CD8-positive, alpha-beta memory T cell (primary cell): ENCODE measurements at regions of chr6 and their contacts with region 1.

Region 1: GRCh38 chr6:112043032-112044007 is 10.6 kb upstream of the CCN6 start:
- DNase-seq: peak; percentile 89 to 94 (median 90)
- H3K4me3 ChIP-seq: peak overlapping the region; percentile 89
- H3K4me3 Mint-ChIP-seq: peak overlapping the region; percentile 96 to 99 (median 97)
- H3K27ac ChIP-seq: peak overlapping the region; percentile 89
- H3K27ac Mint-ChIP-seq: peak overlapping the region; percentile 95 to 100 (median 99)
- H3K4me1 ChIP-seq: peaks cover 12% of the 10 kb centered on the region
- H3K4me1 Mint-ChIP-seq: peaks cover 9 to 20% (median 18%) of the 10 kb centered on the region in 3 donors
- H3K27me3 ChIP-seq: no peaks in the 10 kb centered on the region
- H3K27me3 Mint-ChIP-seq: no peaks in the 10 kb centered on the region

Region 2: GRCh38 chr6:111259089-111259831 is 784.1 kb before region 1 on chr6:
- CTCF ChIA-PET with region 1: interaction called, 60 read pairs
- POLR2A ChIA-PET with region 1: interaction called, 9 read pairs
- DNase-seq: peak; percentile 99 to 100 (median 99)
- H3K4me3 ChIP-seq: peak overlapping the region; percentile 49
- H3K4me3 Mint-ChIP-seq: peak overlapping the region; percentile 81 to 93 (median 87)
- H3K27ac ChIP-seq: peak overlapping the region; percentile 86
- H3K27ac Mint-ChIP-seq: peak overlapping the region; percentile 83 to 97 (median 94)
- H3K4me1 ChIP-seq: peaks cover 26% of the 10 kb centered on the region
- H3K4me1 Mint-ChIP-seq: peaks cover 29 to 41% (median 35%) of the 10 kb centered on the region in 3 donors
- H3K27me3 ChIP-seq: no peaks in the 10 kb centered on the region
- H3K27me3 Mint-ChIP-seq: peaks cover 7 to 10% of the 10 kb centered on the region in 2 donors

Region 3: GRCh38 chr6:111721753-111722154 is 321.6 kb before region 1 on chr6:
- CTCF ChIA-PET with region 1: interaction called, 10 read pairs
- POLR2A ChIA-PET with region 1: interaction called, 10 read pairs
- DNase-seq: peak in 3 of 5 donors; percentile 35 to 47 (median 45)
- H3K4me3 ChIP-seq: no peak overlapping the region
- H3K4me3 Mint-ChIP-seq: peak overlapping the region in 6 of 7 donors; percentile 29 to 67 (median 50)
- H3K27ac ChIP-seq: no peak overlapping the region
- H3K27ac Mint-ChIP-seq: peak overlapping the region; percentile 87 to 98 (median 92)
- H3K4me1 ChIP-seq: peaks cover 72% of the 10 kb centered on the region
- H3K4me1 Mint-ChIP-seq: peaks cover 84 to 97% (median 84%) of the 10 kb centered on the region in 3 donors
- H3K27me3 ChIP-seq: no peaks in the 10 kb centered on the region
- H3K27me3 Mint-ChIP-seq: no peaks in the 10 kb centered on the region

Region 4: GRCh38 chr6:112010328-112010727 is 33.0 kb before region 1 on chr6:
- CTCF ChIA-PET with region 1: interaction called, 103 read pairs
- POLR2A ChIA-PET with region 1: interaction called, 4 read pairs
- DNase-seq: peak in 2 of 5 donors; percentile 33 to 51
- H3K4me3 ChIP-seq: no peak overlapping the region
- H3K4me3 Mint-ChIP-seq: no peak overlapping the region
- H3K27ac ChIP-seq: no peak overlapping the region
- H3K27ac Mint-ChIP-seq: peak overlapping the region in 2 of 8 donors; percentile 2 to 44
- H3K4me1 ChIP-seq: peaks cover 5% of the 10 kb centered on the region
- H3K4me1 Mint-ChIP-seq: peaks cover 0 to 4% (median 0%) of the 10 kb centered on the region in 3 donors
- H3K27me3 ChIP-seq: no peaks in the 10 kb centered on the region
- H3K27me3 Mint-ChIP-seq: peaks cover 0 to 4% of the 10 kb centered on the region in 2 donors

Region 5: DNA sequence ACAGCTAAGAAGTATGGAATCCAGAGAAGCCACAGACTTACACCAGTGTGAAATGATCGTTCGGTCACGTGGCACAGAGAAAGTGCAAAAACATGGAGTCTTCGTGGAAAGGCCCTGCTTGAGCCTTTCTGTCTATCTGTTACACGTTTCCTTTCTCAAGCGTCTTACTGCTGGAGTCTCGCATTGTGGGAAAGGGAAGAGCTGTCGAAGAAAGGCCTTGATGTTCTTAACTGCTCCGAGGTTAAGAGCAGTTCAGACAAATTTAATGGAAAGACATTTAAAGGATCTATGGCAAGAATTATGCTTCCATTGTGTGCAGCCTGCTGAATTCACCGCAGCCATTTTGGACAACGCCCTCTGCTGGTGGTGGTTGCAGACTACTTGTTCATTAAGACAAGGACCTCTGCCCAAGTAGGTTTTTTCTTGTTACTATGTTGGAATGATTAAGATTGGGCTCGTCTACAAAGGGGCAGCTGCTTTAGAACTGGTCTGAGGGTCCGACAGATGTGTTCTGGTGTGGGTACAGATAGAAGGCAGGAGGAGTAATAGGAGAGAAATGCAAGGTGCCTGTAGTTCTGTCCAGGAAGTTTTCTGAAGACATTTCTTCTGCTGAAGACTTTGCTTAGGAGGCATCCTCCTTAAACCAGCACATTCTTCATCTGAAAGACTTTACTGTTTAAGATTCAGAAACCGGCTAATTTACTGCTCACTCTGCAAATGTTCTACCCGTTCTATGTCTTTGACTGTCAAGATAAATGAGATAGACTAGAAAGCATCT is 14.1 kb before region 1 on chr6:
- CTCF ChIA-PET with region 1: interaction called, 77 read pairs
- POLR2A ChIA-PET with region 1: interaction called, 5 read pairs
- DNase-seq: peak; percentile 32 to 68 (median 46)
- H3K4me3 ChIP-seq: peak overlapping the region; percentile 16
- H3K4me3 Mint-ChIP-seq: peak overlapping the region in 6 of 7 donors; percentile 17 to 73 (median 66)
- H3K27ac ChIP-seq: no peak overlapping the region
- H3K27ac Mint-ChIP-seq: peak overlapping the region; percentile 79 to 96 (median 93)
- H3K4me1 ChIP-seq: peaks cover 69% of the 10 kb centered on the region
- H3K4me1 Mint-ChIP-seq: peaks cover 47 to 72% (median 65%) of the 10 kb centered on the region in 3 donors
- H3K27me3 ChIP-seq: no peaks in the 10 kb centered on the region
- H3K27me3 Mint-ChIP-seq: peaks cover 0 to 2% of the 10 kb centered on the region in 2 donors